Pancreas (tissue), 10 donors: ENCODE measurements at regions of chr5 and their contacts with region 1.

Region 1: DNA sequence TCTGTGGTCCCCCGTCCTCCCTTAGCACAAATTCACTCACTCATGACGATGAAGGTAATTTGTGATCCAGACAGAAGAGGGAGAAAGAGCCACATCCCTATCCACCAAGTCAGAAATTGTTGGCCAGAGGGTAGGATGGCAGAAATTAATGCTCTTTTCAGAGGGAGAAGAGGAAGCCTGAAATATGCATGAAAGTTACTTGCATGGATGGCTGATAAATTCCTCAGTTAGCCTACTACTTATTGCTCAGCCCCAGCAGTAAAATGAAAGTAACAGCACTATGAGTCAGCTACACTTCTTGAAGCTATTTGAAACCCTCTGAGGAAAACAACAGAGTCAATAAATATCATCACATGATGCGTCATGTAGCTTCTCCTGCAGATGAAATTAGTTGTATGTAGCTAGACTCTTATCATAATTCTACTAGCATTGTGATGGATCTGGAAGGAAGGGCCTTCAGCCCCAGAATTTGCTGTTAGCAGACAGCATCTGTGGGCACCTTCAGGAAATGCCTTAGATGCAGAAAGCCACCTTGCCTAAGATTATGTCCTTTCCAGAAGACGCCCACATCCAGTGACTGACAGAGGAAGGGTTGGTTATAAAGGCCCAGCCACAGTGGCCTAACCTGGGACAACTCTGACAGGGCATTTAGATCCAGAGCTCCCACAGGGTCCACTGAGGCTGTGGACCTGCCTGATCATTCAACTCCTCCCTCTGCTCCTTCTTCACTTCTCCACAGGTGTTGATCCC is 81.2 kb upstream of the CCDC112 start:
- DNase-seq: no peak
- ATAC-seq: no peak
- H3K4me3 ChIP-seq: no peak overlapping the region
- H3K27ac ChIP-seq: no peak overlapping the region
- H3K4me1 ChIP-seq: peaks cover 13 to 15% (median 13%) of the 10 kb centered on the region in 3 donors
- H3K27me3 ChIP-seq: no peaks in the 10 kb centered on the region
- CTCF ChIP-seq: no peak

Region 2: GRCh38 chr5:115579747-115580173 is 202.1 kb after region 1 on chr5:
- intact Hi-C with region 1: loop called in 1 of 3 experiments (anchors 10 kb)
- DNase-seq: no peak
- ATAC-seq: no peak
- H3K4me3 ChIP-seq: no peak overlapping the region
- H3K27ac ChIP-seq: no peak overlapping the region
- H3K4me1 ChIP-seq: no peaks in the 10 kb centered on the region
- H3K27me3 ChIP-seq: no peaks in the 10 kb centered on the region
- CTCF ChIP-seq: no peak